H1 (cell line): ENCODE measurements at regions of chr1 and their contacts with region 1.

Region 1: GRCh38 chr1:63622849-63623566 is 29.8 kb downstream of the PGM1 start:
- DNase-seq: no peak
- H3K4me3 ChIP-seq: no peak overlapping the region
- H3K27ac ChIP-seq: no peak overlapping the region
- H3K4me1 ChIP-seq: peaks cover 0 to 3% (median 0%) of the 10 kb centered on the region in 4 experiments; a peak in 2 of 7 replicates
- H3K27me3 ChIP-seq: no peaks in the 10 kb centered on the region
- CTCF ChIP-seq: no peak
- EP300 ChIP-seq: no peak
- POLR2A ChIP-seq: no peak
- RAD21 ChIP-seq: peak; percentile 6 to 37; a peak in 1 of 4 replicates

Region 2: DNA sequence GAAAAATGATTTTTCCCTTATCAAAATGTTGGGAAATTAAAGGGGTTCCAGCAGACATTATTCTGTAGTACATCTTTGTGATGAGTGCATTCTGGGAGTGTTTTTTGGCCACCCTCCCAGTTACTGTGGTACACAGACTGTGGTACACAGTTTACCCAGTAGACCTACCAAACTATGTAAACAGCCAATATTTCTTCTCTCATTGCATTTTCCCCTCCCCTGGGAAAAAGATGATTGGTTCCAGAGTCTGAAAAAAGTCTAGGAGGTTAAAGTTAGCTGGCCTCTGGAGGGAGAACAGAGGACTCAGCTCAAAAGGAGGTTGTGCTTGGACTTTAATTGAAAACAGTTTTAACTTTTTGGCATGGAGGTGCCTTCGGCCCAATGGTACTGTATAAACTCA is 12.7 kb after region 1 on chr1:
- CTCF ChIA-PET with region 1: interaction called, 12 read pairs
- POLR2A ChIA-PET with region 1: no interaction called
- DNase-seq: no peak
- H3K4me3 ChIP-seq: no peak overlapping the region
- H3K27ac ChIP-seq: no peak overlapping the region
- H3K4me1 ChIP-seq: no peaks in the 10 kb centered on the region
- H3K27me3 ChIP-seq: no peaks in the 10 kb centered on the region
- CTCF ChIP-seq: no peak
- EP300 ChIP-seq: no peak
- POLR2A ChIP-seq: no peak
- RAD21 ChIP-seq: no peak